Activated CD4-positive, alpha-beta T cell treated with anti-CD3 and anti-CD28 coated beads, Interleukin-2, amount 10 ng/mL, durations not matched to agents 24 days and 14 days (primary cell): ENCODE measurements at regions of chr11 and their contacts with region 1.

Region 1: DNA sequence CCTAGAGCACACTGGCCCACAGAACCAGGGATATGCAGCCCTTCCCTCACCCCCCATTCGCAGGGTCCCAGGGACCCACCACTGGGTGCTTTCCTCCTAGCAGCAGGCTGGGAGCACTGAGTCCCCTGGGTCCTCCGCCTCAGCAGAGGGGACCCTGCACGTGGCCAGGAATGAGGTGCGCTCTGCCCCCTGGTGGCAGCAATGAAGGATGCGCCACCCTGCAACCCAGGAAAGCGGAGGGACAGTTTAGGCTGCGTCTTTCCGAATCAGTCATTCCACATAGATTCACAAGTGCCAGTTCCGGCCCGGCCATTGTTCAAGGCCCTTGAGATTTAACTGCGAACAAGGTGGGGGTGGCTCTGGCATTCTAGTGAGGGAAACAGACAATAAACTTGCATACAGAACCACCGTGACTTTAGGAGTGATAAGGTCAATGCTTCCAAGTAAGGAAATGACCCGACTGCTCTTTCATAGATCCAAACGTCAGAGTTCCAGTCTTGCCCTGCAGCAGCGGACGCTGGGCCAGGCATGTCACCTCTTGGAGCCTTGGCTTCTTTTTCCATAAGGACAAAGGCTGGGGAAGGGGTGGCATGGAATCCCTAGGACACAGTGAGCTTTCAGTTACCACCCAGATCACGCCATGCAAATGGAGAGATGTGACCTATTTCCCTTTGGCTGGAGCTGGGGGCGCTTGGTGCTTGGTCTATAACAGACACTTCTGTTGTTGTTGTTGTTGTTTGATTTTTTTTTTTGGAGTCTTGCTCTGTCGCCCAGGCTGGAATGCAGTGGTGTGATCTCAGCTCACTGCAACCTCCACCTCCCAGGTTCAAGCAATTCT is 7.7 kb downstream of the RIN1 start:
- DNase-seq: peak; percentile 94
- H3K4me3 Mint-ChIP-seq: peak overlapping the region; percentile 34
- H3K27ac Mint-ChIP-seq: peak overlapping the region; percentile 72
- H3K4me1 Mint-ChIP-seq: peaks cover 36% of the 10 kb centered on the region
- H3K27me3 Mint-ChIP-seq: no peaks in the 10 kb centered on the region

Region 2: GRCh38 chr11:66288671-66289547 is 39.6 kb before region 1 on chr11 and contains the start of gene YIF1A:
- intact Hi-C with region 1: loop called (anchors 1 kb)
- DNase-seq: peak; percentile 100
- H3K4me3 Mint-ChIP-seq: peak within 1 kb of the TSS; percentile 84
- H3K27ac Mint-ChIP-seq: peak within 1 kb of the TSS; percentile 96
- H3K4me1 Mint-ChIP-seq: peaks cover 32% of the 10 kb centered on the region
- H3K27me3 Mint-ChIP-seq: peaks cover 30% of the 10 kb centered on the region
- total RNA-seq, gene YIF1A: 108 and 119 TPM in 2 replicates